ENCODE measurements at regions of chr11 and their contacts with region 1.

Region 1: DNA sequence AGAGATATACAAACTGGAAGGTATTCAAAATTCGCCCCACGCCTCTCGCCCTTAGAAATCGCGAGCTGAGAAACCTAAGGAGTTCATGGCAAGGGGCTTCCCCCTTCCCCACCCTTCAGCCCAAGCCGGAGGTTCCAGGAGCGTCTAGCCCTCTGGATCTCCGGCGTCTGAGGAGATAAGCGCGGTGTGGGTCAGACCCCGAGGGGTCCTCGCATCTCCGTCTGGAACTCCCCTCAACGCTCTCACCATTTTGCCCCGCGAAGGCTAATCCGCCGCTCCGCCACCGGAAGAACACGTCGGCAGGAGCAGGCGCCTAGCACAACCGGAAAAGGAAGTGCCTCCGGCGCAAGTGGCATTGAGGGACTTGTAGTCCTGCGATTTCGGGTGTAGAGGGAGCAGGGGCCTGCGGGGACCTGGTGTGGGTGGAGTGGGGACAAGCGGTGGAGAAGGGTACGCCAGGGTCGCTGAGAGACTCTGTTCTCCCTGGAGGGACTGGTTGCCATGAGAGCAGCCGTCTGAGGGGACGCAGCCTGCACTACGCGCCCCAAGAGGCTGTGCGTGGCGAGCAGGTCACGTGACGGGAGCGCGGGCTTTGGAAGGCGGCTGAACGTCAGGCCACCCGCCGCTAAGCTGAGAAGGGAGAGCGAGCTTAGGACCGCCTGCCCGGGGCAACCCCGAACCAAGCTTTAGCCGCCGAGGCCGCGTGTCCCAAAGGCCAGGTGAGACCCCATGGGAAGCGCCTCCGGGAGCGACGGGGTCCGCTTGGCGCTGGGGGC is at the starts of genes FEN1 and TMEM258:
- DNase-seq: peak; percentile 76
- ATAC-seq: peak; percentile 92
- H3K4me3 ChIP-seq: peak within 1 kb of the TSS; percentile 98
- H3K27ac ChIP-seq: peak within 1 kb of the TSS; percentile 100
- H3K4me1 ChIP-seq: no peaks in the 10 kb centered on the region; the same call in 1 of the 2 replicates
- H3K27me3 ChIP-seq: no peaks in the 10 kb centered on the region
- CTCF ChIP-seq: no peak
- EP300 ChIP-seq: no peak
- POLR2A ChIP-seq: peak; percentile 98
- RAD21 ChIP-seq: no peak
- polyA plus RNA-seq, gene FEN1: 54.8 to 99.9 TPM
- polyA plus RNA-seq, gene TMEM258: 800 to 840 TPM

Region 2: GRCh38 chr11:61747192-61747966 is 45.1 kb before region 1 on chr11:
- CTCF ChIA-PET with region 1: interaction called, 200 read pairs
- POLR2A ChIA-PET with region 1: interaction called, 60 read pairs
- RAD21 ChIA-PET with region 1: interaction called, 32 read pairs
- SMC1A ChIA-PET with region 1: interaction called, 91 read pairs
- in situ Hi-C with region 1: no loop called
- intact Hi-C with region 1: no loop called
- DNase-seq: no peak
- ATAC-seq: peak; percentile 93
- H3K4me3 ChIP-seq: no peak overlapping the region
- H3K27ac ChIP-seq: no peak overlapping the region
- H3K4me1 ChIP-seq: no peaks in the 10 kb centered on the region; the same call in 1 of the 2 replicates
- H3K27me3 ChIP-seq: peaks cover 0 to 4% of the 10 kb centered on the region in 2 experiments; a peak in 1 of 4 replicates
- CTCF ChIP-seq: peak; percentile 75 to 96 (median 96)
- EP300 ChIP-seq: no peak
- POLR2A ChIP-seq: no peak
- RAD21 ChIP-seq: peak; percentile 55

Region 3: GRCh38 chr11:61816736-61817455 is 24.4 kb after region 1 on chr11 and contains the start of gene FADS1:
- CTCF ChIA-PET with region 1: interaction called, 141 read pairs
- POLR2A ChIA-PET with region 1: interaction called, 77 read pairs
- RAD21 ChIA-PET with region 1: interaction called, 51 read pairs
- SMC1A ChIA-PET with region 1: interaction called, 28 read pairs
- in situ Hi-C with region 1: no loop called
- intact Hi-C with region 1: loop called (anchors 1 kb)
- DNase-seq: peak; percentile 60
- ATAC-seq: peak; percentile 71
- H3K4me3 ChIP-seq: peak within 1 kb of the TSS; percentile 81
- H3K27ac ChIP-seq: peak within 1 kb of the TSS; percentile 87
- H3K4me1 ChIP-seq: peaks cover 3% of the 10 kb centered on the region; the same call in 1 of the 2 replicates
- H3K27me3 ChIP-seq: no peaks in the 10 kb centered on the region
- CTCF ChIP-seq: peak; percentile 53 to 73 (median 69)
- EP300 ChIP-seq: no peak
- POLR2A ChIP-seq: peak; percentile 60
- RAD21 ChIP-seq: no peak
- polyA plus RNA-seq, gene FADS1: 8.8 to 14.6 TPM

Region 4: DNA sequence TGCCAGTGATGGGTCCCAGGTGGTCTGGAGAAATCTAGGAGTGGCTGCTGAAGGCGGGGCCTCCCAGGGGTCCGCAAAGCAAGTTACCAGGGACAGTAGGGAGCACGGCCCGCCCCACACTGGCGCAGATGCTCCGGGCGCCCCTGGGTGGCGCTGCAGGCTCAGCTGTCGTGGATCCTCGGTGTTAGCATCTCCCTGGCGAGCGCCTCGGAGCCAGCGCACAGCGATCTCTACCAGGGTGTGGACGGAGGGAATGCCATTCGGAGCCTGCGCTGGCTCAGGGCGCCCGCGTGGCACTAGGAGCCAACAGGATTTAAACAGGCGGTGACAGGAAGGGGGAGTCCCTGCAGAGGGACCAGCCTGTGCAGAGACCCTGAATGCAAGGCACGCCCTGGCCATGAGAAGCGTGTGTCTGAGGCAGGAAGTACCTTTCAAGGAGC is 78.7 kb after region 1 on chr11:
- CTCF ChIA-PET with region 1: interaction called, 49 read pairs
- POLR2A ChIA-PET with region 1: interaction called, 3 read pairs
- RAD21 ChIA-PET with region 1: interaction called, 17 read pairs
- SMC1A ChIA-PET with region 1: interaction called, 13 read pairs
- in situ Hi-C with region 1: no loop called
- intact Hi-C with region 1: loop called (anchors 5 kb)
- DNase-seq: no peak
- ATAC-seq: peak; percentile 93
- H3K4me3 ChIP-seq: no peak overlapping the region
- H3K27ac ChIP-seq: no peak overlapping the region
- H3K4me1 ChIP-seq: no peaks in the 10 kb centered on the region
- H3K27me3 ChIP-seq: no peaks in the 10 kb centered on the region; a peak in 1 of 4 replicates
- CTCF ChIP-seq: peak; percentile 85 to 94 (median 91)
- EP300 ChIP-seq: no peak
- POLR2A ChIP-seq: no peak
- RAD21 ChIP-seq: peak; percentile 82

Region 5: GRCh38 chr11:61899146-61899841 is 106.8 kb after region 1 on chr11:
- CTCF ChIA-PET with region 1: interaction called, 127 read pairs
- POLR2A ChIA-PET with region 1: no interaction called
- RAD21 ChIA-PET with region 1: interaction called, 63 read pairs
- SMC1A ChIA-PET with region 1: interaction called, 59 read pairs
- in situ Hi-C with region 1: loop called (anchors 5 kb)
- intact Hi-C with region 1: loop called (anchors 1 kb)
- DNase-seq: peak; percentile 40
- ATAC-seq: peak; percentile 95
- H3K4me3 ChIP-seq: no peak overlapping the region
- H3K27ac ChIP-seq: no peak overlapping the region
- H3K4me1 ChIP-seq: no peaks in the 10 kb centered on the region
- H3K27me3 ChIP-seq: peaks cover 0 to 1% of the 10 kb centered on the region in 2 experiments; a peak in 1 of 4 replicates
- CTCF ChIP-seq: peak; percentile 99 to 100 (median 99)
- EP300 ChIP-seq: no peak
- POLR2A ChIP-seq: no peak
- RAD21 ChIP-seq: peak; percentile 85

Region 6: DNA sequence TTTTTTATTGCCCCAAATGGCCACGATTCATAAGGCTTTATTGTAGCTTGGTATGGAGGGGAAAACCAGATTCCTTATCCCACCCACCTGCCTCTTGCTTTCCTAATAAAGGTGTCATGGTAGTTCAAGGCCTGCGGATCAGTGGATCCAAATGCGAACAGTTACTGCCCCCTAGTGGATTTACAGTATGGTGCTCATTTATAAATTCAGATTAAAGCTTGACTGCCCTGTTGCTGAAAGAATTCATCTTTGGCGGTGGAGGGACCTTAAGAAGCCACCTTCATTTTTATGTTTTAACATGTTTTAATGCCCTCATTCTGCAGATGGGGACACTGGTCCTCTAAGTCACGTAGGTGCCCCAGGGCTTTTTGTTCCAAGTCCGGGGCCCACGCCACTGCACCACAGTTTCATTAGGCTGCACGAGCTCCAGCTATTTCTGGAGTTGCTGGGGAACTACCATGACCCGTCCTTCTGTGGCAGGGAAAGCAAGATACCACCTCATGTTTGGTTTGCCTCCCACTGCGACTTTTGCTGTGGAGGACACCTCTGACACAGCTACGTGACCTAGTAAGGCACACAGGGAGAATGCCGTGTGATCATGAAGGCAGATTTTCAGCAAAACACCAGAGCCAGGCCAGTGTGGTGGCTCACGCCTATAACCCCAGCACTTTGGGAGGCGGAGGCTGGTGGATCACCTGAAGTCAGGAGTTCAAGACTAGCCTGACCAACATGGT is 315.7 kb after region 1 on chr11:
- CTCF ChIA-PET with region 1: interaction called, 118 read pairs
- POLR2A ChIA-PET with region 1: no interaction called
- RAD21 ChIA-PET with region 1: interaction called, 70 read pairs
- SMC1A ChIA-PET with region 1: interaction called, 43 read pairs
- in situ Hi-C with region 1: loop called (anchors 5 kb)
- intact Hi-C with region 1: loop called (anchors 5 kb)
- DNase-seq: peak; percentile 11
- ATAC-seq: peak; percentile 79
- H3K4me3 ChIP-seq: no peak overlapping the region
- H3K27ac ChIP-seq: no peak overlapping the region
- H3K4me1 ChIP-seq: no peaks in the 10 kb centered on the region
- H3K27me3 ChIP-seq: no peaks in the 10 kb centered on the region
- CTCF ChIP-seq: peak; percentile 59 to 82 (median 80)
- EP300 ChIP-seq: no peak
- POLR2A ChIP-seq: no peak
- RAD21 ChIP-seq: peak; percentile 91